ENCODE measurements at regions of chr14 and their contacts with region 1.

Region 1: GRCh38 chr14:99628832-99629618 is 15.9 kb upstream of the HHIPL1 start:
- DNase-seq: peak; percentile 74
- H3K4me3 ChIP-seq: no peak overlapping the region
- H3K27ac ChIP-seq: no peak overlapping the region
- H3K4me1 ChIP-seq: no peaks in the 10 kb centered on the region
- H3K27me3 ChIP-seq: no peaks in the 10 kb centered on the region
- CTCF ChIP-seq: peak; percentile 91 to 97 (median 95)
- POLR2A ChIP-seq: no peak

Region 2: DNA sequence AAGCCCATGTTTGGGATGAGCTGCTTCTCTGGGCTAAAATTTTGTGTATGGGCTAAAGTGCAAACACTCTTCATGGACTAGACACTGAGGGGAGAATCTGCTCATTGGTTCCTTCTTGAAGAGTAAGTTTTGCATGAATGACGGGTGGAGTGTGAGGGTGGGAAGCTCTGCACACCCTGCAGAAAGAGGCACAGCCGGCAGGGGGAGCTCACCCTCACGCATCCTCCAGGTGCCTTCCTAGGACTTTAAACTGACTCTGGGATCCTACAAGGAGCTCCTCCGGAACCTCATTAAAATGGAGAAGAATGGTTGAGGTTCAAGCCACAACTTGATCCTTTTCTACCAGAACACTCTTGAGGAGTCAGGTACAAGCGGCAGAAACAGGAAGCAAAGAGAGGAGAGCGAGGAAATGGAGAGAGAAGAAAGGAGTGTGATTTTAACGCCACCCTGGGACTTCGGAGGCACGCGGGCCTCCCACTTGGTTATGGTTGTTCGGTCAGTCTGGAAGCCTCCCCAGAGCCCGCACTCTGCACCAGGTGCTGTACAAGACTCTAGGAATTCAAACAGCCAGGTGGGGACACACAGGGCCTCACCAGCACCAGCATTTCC is 235.9 kb before region 1 on chr14:
- intact Hi-C with region 1: loop called (anchors 5 kb)
- DNase-seq: no peak
- H3K4me3 ChIP-seq: no peak overlapping the region
- H3K27ac ChIP-seq: no peak overlapping the region
- H3K4me1 ChIP-seq: no peaks in the 10 kb centered on the region
- H3K27me3 ChIP-seq: no peaks in the 10 kb centered on the region
- CTCF ChIP-seq: peak in 3 of 4 experiments; percentile 29 to 49 (median 37)
- POLR2A ChIP-seq: no peak

Region 3: DNA sequence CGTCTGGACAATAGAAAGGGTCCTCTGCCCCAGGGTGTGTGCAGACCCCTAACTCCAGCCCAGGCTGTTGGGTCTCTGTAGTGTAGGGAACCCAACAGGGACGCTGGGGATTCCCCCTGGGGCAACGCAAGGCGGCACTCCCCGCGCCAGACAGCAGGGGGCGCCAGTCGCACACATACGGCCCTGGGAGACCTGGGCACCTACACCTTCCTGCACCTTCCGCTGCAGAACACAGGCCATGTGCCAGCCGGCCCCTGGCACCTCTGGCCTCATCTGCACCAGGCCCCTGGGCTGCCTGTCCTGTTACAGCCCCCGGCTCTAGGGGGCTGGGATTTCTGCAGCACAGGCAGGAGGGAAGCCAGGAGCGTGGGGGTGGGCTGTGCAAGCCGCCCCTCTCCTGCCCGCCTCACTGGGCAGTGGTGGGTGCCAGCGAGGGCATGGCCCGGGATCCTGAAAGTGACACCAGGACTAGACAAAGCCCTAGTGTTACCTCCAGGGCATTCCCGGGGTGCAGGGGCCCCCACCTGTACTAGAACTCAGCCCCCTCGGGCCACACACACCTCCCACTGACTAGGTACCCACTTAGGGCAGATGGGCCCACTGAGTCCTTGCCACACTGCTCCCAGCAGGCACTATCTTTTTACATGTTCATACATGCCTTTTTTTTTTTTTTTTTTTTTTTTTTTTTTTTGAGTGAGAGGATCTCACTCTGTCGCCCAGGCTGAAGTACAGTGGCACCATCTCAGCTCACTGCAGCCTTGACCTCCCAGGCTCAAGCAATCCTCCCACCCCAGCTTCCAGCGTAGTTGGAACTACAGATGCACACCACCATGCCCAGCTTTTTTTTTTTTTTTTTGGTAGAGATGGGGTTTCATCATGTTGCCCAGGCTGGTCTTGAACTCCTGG is 110.3 kb before region 1 on chr14:
- intact Hi-C with region 1: loop called (anchors 1 kb)
- DNase-seq: peak; percentile 73
- H3K4me3 ChIP-seq: no peak overlapping the region
- H3K27ac ChIP-seq: no peak overlapping the region
- H3K4me1 ChIP-seq: peaks cover 10% of the 10 kb centered on the region
- H3K27me3 ChIP-seq: no peaks in the 10 kb centered on the region
- CTCF ChIP-seq: peak; percentile 97 to 98 (median 98)
- POLR2A ChIP-seq: no peak

Region 4: GRCh38 chr14:99672506-99673304 is 43.7 kb after region 1 on chr14:
- intact Hi-C with region 1: no loop called
- DNase-seq: no peak
- H3K4me3 ChIP-seq: no peak overlapping the region
- H3K27ac ChIP-seq: no peak overlapping the region
- H3K4me1 ChIP-seq: no peaks in the 10 kb centered on the region
- H3K27me3 ChIP-seq: no peaks in the 10 kb centered on the region
- CTCF ChIP-seq: no peak
- POLR2A ChIP-seq: no peak